ENCODE measurements at regions of chr17 and their contacts with region 1.

Region 1: DNA sequence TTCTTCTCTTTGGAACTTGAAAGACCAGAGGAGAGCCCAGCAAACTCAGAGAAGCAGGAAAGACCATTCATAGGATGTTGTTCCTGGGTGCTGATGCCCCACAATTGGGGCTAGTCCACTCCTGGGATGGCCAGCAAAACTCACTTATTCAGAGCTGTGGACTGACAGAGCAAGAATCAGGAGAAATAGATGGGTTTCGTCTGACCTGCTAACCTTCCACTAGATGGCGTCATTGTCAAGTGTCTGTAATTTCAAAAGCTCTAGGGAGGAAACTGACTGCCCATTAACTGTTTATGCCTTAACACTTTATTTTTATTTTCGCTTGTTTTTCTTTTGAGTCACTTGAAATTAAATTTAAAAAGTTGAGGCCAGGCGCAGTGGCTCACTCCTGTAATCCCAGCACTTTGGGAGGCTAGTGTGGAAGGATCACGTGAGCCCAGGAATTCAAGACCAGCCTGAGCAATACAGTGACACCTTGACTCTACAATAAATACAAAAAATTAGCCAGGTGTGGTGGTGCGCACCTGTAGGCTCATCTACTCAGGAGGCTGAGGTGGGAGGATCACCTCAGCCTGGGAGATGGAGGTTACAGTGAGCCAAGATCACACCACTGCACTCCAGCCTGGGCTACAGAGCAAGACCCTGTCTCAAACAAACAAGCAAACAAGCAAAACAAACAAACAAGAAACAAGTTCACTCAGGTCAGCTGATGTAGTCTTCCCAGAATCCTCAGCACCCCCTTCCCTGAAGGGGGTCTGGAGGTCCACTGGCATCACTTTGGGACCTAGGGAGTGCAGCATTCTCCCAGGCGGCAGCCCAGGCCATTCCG is 28.6 kb upstream of the MILR1 start:
- DNase-seq: peak; percentile 67
- H3K4me3 ChIP-seq: no peak overlapping the region
- H3K27ac ChIP-seq: no peak overlapping the region
- H3K27me3 ChIP-seq: peaks cover 12% of the 10 kb centered on the region
- CTCF ChIP-seq: peak; percentile 77

Region 2: GRCh38 chr17:64297467-64298098 is 122.8 kb before region 1 on chr17:
- CTCF ChIA-PET with region 1: interaction called, 97 read pairs
- POLR2A ChIA-PET with region 1: no interaction called
- DNase-seq: no peak
- H3K4me3 ChIP-seq: no peak overlapping the region
- H3K27ac ChIP-seq: no peak overlapping the region
- H3K27me3 ChIP-seq: peaks cover 13% of the 10 kb centered on the region
- CTCF ChIP-seq: no peak

Region 3: DNA sequence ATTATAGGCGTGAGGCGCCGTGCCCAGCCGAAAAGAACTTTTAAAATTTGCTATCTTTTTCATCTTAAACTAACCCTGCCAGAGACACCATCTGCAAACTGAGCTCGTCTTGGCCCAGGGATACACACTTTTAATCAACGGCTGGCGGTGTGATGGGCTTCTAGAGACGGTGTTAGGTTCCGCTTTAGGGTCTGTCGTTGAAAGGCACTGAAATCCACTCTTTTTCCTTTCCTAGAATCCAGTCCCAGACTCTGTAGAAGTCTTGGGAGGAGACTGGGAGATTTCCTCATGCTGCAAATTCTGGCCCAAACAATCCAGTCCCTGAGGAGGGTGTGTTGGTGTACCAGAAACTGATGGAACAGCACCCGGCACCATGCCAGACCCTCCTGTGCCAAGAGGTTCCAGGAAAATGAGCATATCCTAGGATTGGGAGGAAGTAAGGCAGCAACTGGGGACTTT is 105.3 kb before region 1 on chr17:
- CTCF ChIA-PET with region 1: interaction called, 104 read pairs
- POLR2A ChIA-PET with region 1: no interaction called
- DNase-seq: no peak
- H3K4me3 ChIP-seq: no peak overlapping the region
- H3K27ac ChIP-seq: no peak overlapping the region
- H3K27me3 ChIP-seq: peaks cover 23% of the 10 kb centered on the region
- CTCF ChIP-seq: no peak

Region 4: GRCh38 chr17:64326395-64327054 is 93.8 kb before region 1 on chr17:
- CTCF ChIA-PET with region 1: interaction called, 104 read pairs
- POLR2A ChIA-PET with region 1: no interaction called
- DNase-seq: no peak
- H3K4me3 ChIP-seq: no peak overlapping the region
- H3K27ac ChIP-seq: no peak overlapping the region
- H3K27me3 ChIP-seq: peaks cover 38% of the 10 kb centered on the region
- CTCF ChIP-seq: no peak

Region 5: DNA sequence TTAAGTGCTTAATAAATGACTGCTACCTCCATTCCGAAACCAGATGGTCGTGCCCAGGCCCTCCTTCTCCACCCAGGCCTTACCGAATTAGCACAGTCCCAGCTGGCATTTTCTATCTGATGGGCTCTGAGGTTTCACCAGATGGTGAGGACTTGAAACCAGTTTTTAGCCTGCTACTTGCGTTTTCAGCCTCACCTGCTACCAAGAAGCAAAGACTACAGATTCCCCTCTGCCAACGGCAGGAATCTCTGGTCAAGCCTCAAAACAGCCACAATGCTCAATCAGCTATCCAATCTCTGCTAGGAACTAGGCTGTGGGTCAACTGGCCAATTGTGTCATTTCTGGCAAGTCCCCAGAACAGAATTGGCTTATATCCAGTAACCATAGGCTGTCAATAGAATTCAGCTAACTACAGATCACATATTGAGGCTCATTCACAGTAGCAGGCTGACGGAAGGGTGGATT is 41.4 kb before region 1 on chr17:
- CTCF ChIA-PET with region 1: no interaction called
- POLR2A ChIA-PET with region 1: no interaction called
- DNase-seq: no peak
- H3K4me3 ChIP-seq: no peak overlapping the region
- H3K27ac ChIP-seq: no peak overlapping the region
- H3K27me3 ChIP-seq: peaks cover 11% of the 10 kb centered on the region
- CTCF ChIP-seq: no peak

Region 6: DNA sequence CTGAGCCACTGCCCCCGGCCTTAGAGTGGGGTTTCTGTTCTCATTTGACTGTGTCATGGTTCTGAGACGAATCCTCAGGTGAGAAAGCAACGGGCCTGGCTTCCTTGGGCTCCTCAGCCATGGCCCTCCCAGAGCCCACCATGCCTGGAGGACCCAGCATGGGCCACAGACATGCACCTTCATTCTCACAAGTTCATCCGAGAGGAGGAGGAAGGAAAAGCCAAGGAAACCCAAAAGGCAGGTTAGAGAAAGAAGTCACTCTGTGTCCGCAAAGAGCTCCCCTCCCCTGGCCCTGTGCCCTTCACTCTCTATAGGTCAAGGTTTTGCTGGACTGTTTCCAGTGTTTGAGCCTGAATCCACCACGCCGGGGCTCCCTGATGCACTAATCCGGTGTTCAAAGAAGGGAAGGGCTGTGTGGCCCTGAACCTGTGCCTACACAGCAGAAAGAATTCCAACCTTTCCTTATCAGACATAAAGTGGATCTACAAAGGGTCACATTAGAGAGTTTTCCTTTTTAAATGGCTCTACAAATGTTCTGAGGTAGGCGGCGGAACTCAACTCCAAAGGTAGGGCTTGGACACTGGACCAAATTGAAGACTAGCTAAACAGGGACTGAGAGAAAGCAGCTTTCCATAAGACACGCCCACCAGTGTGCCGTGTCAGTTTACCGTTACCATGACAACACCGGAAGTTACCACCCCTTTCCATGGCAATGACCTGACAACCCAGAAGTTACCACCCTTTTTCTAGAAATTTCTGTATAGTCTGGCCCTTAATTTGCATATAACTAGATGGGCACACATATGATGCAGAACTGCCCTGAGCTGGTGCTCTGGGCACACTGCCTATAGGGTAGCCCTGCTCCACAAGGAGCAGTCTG is 13.8 kb before region 1 on chr17:
- CTCF ChIA-PET with region 1: interaction called, 38 read pairs
- POLR2A ChIA-PET with region 1: no interaction called
- DNase-seq: no peak
- H3K4me3 ChIP-seq: no peak overlapping the region
- H3K27ac ChIP-seq: no peak overlapping the region
- H3K27me3 ChIP-seq: peaks cover 3% of the 10 kb centered on the region
- CTCF ChIP-seq: no peak

Region 7: DNA sequence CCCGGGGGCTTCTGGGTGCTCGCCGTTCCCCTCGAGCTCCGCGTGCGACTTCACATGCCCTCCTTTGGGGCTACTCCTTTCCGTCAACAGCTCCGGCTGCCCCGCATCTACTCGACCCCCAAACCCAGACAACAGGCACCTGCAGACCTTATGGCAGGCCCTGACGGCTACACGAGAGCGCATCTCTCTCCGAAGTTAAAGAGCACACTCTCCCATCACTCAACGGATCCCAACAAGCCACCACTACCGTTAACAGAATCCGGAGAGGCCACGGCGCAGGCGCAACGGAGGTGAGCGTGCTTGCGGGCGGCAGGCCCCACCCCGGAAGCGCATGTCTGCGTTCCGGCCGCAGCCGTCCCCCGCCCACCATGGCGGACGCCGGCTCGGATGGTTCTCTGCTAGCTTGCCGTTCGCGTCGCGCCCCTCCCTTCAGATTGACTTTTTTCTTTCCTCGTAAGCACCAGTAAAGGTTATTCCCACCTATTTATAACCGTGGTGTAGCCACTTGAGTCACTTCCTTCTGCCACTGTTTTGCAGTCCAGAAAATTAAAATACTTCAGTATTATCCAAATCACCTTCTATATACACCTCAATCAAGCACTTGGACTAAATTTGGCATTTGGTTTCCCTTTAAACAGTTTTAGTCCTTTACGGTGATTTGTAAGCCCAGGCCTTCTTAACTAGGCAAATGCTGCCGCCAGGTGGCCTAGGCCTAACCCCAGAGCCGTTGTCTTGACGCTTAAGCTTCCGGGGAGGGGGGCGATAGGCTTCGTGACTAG is 76.6 kb after region 1 on chr17 and contains the start of gene POLG2:
- CTCF ChIA-PET with region 1: interaction called, 236 read pairs
- POLR2A ChIA-PET with region 1: interaction called, 4 read pairs
- DNase-seq: peak; percentile 86
- H3K4me3 ChIP-seq: peak within 1 kb of the TSS; percentile 86
- H3K27ac ChIP-seq: peak within 1 kb of the TSS; percentile 81
- H3K27me3 ChIP-seq: no peaks in the 10 kb centered on the region
- CTCF ChIP-seq: peak; percentile 65
- polyA plus RNA-seq, gene POLG2: 6.6 and 9.2 TPM in 2 replicates

Measured in AG04450 (cell line).